ENCODE measurements at regions of chr11 and their contacts with region 1.

Region 1: DNA sequence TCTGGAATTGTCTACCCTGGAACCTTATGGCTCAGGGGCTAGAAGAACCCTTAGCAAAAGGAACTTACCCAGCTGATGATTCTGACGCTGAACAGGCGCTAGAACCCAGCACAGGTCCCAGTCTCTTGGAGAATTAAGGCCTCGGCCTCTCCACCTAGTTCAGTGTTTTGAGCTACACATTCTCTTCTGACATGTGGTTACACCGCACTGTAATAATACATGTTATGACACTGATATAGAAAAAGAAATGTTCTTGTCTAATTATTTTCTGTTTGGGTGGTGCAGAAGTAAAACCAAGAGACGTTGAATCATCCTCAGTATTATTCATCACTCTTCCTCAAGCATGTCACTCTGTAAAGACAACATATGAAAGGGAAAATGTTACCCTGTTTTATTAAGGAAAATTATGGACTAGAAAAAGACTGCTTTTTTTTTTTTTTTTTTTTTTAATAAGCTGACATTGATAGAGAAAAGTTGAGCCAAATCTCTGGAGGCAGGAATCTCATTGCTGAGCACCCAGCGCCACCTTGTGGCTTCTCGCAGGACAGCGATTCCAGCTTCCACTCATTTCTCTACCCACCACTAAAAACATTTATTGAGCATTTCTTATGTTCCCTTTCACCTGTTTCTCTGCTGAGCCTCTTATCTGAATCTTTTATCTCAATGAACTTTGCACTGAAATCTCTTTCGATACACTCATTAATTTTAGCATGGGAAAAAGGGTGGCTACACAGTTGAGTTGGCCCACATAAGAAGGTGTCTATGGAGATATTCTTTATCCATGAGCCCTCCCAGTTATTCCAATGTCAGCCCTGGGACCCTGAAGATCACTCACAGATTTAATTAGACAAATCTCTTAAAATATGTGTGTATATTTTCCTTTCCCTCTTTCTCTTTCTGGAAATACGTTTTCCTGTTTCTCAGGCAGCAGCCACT is 12.6 kb upstream of the APLNR start:
- DNase-seq: peak; percentile 76
- ATAC-seq: peak; percentile 86

Region 2: GRCh38 chr11:56841210-56841810 is 408.3 kb before region 1 on chr11:
- intact Hi-C with region 1: loop called (anchors 2 kb)
- DNase-seq: no peak
- ATAC-seq: peak; percentile 60

Region 3: DNA sequence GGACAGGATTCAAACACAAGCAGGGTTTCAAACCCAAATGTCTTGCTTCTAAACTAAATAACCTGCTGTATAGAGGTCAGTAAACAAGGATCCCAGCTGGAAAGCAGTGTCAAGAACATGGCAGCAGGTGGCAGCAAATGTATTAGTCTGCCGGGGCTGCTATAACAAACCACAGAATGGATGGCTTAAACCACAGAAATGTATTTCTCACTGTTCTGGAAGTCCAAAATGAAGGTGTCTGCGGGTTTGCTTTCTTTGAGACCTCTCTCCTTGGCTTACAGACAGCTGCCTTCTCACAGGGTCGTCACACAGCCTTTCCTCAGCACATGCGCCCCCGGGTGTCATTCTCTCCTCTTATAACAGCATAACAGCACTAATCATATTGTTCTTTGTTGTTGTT is 133.0 kb before region 1 on chr11:
- intact Hi-C with region 1: loop called (anchors 5 kb)
- DNase-seq: peak; percentile 44
- ATAC-seq: peak; percentile 48

Region 4: GRCh38 chr11:57131080-57131790 is 118.4 kb before region 1 on chr11:
- intact Hi-C with region 1: loop called (anchors 5 kb)
- DNase-seq: no peak
- ATAC-seq: peak; percentile 55